ENCODE measurements at regions of chr2 and their contacts with region 1.

Region 1: DNA sequence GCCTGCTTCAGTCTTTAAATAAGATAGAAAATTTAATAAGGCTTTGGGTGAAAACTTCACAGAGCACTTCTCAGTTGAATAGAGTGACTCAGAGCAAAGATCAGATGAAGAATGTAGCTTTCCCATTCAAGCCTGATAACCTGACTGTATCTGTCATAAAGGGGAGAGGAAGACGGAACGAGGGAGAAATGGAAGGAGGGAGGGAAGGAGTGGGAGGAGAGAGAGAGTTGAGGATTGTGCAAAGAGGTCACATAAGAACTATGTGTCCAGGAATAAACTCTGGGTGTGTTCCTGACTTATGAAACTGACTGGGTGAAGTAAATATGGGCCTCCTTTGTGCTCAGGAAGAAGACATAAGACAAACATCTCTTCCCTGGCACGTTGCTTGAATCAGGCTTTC is 385.5 kb downstream of the LPIN1 start:
- DNase-seq: no peak
- ATAC-seq: no peak
- H3K4me3 ChIP-seq: no peak overlapping the region
- H3K4me3 Mint-ChIP-seq: no peak overlapping the region
- H3K27ac ChIP-seq: peak overlapping the region; percentile 18 to 22
- H3K27ac Mint-ChIP-seq: no peak overlapping the region
- H3K4me1 ChIP-seq: peaks cover 28% of the 10 kb centered on the region
- H3K4me1 Mint-ChIP-seq: no peaks in the 10 kb centered on the region
- H3K27me3 ChIP-seq: no peaks in the 10 kb centered on the region
- H3K27me3 Mint-ChIP-seq: no peaks in the 10 kb centered on the region
- CTCF ChIP-seq: no peak

Region 2: DNA sequence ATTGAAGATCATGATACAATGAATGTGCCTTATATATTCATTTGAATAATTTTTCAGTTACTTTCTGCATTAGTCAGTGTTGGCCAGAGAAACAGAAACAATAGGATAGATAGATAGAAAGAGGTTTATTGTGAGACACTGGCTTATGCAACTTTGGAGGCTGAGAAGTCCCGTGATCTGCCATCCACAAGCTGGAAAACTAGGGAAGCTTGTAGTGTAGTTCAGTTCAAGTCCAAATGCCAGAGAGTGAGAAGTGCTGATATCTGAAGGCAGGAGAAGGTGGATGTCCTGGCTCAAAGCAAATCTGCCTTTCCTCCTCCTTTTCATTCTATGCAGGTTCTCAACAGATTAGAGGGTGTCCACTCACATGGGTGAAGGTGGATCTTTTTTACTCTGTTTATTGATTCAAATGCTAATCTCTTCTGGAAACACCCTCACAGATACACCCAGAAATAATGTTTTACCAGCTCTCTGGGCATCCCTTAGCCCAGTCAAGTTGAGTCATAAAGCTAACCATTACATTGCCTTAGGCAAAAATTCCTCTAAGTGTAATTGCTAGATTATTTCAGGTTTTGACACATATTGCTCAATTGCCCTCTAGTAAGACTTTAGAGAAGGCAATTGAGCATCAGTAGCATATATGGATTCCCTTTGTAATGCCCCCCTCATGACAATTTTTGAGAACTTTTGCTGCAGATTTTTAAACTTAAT is 44.1 kb before region 1 on chr2:
- CTCF ChIA-PET with region 1: no interaction called
- POLR2A ChIA-PET with region 1: no interaction called
- intact Hi-C with region 1: no loop called
- DNase-seq: no peak
- ATAC-seq: no peak
- H3K4me3 ChIP-seq: no peak overlapping the region
- H3K4me3 Mint-ChIP-seq: no peak overlapping the region
- H3K27ac ChIP-seq: no peak overlapping the region
- H3K27ac Mint-ChIP-seq: no peak overlapping the region
- H3K4me1 ChIP-seq: peaks cover 2% of the 10 kb centered on the region
- H3K4me1 Mint-ChIP-seq: peaks cover 9% of the 10 kb centered on the region
- H3K27me3 ChIP-seq: no peaks in the 10 kb centered on the region
- H3K27me3 Mint-ChIP-seq: no peaks in the 10 kb centered on the region
- CTCF ChIP-seq: no peak

Region 3: DNA sequence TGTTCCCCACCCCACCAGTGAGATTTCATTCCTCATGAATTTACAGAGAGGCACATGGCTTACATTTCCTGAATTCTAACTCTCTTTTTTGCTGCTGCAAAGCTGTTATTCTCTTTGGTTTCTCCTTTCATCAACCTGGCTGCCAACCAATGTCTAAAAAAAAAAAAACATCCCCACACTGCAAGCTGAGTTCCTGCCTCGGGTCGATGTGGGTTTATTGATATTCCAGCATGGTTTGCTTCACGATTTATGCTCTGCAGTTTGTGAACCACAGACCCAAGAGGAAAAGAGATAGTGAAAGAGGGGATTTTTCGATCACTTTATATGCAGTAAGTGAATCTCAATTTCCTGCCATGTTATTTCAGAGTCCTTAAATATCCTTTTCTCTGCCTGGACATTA is 21.9 kb before region 1 on chr2:
- CTCF ChIA-PET with region 1: no interaction called
- POLR2A ChIA-PET with region 1: interaction called, 3 read pairs
- intact Hi-C with region 1: loop called in 1 of 2 experiments (anchors 2 kb)
- DNase-seq: peak in 4 of 14 experiments; percentile 15 to 54 (median 46)
- ATAC-seq: peak; percentile 82
- H3K4me3 ChIP-seq: no peak overlapping the region
- H3K4me3 Mint-ChIP-seq: peak overlapping the region; percentile 64
- H3K27ac ChIP-seq: peak overlapping the region; percentile 9
- H3K27ac Mint-ChIP-seq: peak overlapping the region; percentile 84
- H3K4me1 ChIP-seq: peaks cover 20% of the 10 kb centered on the region
- H3K4me1 Mint-ChIP-seq: peaks cover 54% of the 10 kb centered on the region
- H3K27me3 ChIP-seq: no peaks in the 10 kb centered on the region
- H3K27me3 Mint-ChIP-seq: no peaks in the 10 kb centered on the region
- CTCF ChIP-seq: no peak